Activated CD8-positive, alpha-beta memory T cell treated with anti-CD3 and anti-CD28 coated beads, Interleukin-2, amount 10 ng/mL, durations not matched to agents 7 days and 5 days (primary cell): ENCODE measurements at regions of chr14 and their contacts with region 1.

Region 1: DNA sequence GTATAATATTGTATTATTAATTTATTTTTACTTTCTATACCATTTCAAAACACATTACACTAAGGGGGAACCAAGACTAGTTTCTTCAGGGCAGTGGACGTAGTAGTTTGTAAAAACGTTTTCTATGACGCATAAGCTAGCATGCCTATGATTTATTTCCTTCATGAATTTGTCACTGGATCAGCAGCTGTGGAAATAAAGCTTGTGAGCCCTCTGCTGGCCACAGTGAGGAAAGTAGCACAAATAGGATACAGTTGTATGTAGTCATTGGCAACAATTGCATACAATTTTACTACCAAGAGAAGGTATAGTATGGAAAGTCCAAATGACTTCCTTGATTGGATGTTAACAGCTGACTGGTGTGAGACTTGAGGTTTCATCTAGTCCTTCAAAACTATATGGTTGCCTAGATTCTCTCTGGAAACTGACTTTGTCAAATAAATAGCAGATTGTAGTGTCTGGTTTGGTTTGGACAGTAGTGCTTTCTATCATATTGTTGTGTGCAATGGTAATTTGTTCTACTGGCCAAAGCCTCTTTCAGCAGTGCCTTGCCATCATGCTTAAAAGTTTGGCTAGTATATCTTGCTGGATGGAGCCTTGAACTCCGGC is 24.3 kb upstream of the PLEKHD1 start:
- DNase-seq: peak; percentile 77
- ATAC-seq: peak; percentile 80
- H3K4me3 Mint-ChIP-seq: no peak overlapping the region
- H3K27ac Mint-ChIP-seq: no peak overlapping the region
- H3K4me1 Mint-ChIP-seq: no peaks in the 10 kb centered on the region
- H3K27me3 Mint-ChIP-seq: no peaks in the 10 kb centered on the region

Region 2: GRCh38 chr14:69242311-69243224 is 217.6 kb before region 1 on chr14:
- CTCF ChIA-PET with region 1: interaction called, 37 read pairs
- DNase-seq: peak; percentile 68
- ATAC-seq: peak; percentile 77
- H3K4me3 Mint-ChIP-seq: no peak overlapping the region
- H3K27ac Mint-ChIP-seq: no peak overlapping the region
- H3K4me1 Mint-ChIP-seq: peaks cover 2% of the 10 kb centered on the region
- H3K27me3 Mint-ChIP-seq: no peaks in the 10 kb centered on the region

Region 3: GRCh38 chr14:69247676-69248440 is 212.3 kb before region 1 on chr14:
- CTCF ChIA-PET with region 1: interaction called, 37 read pairs
- DNase-seq: no peak
- ATAC-seq: no peak
- H3K4me3 Mint-ChIP-seq: no peak overlapping the region
- H3K27ac Mint-ChIP-seq: no peak overlapping the region
- H3K4me1 Mint-ChIP-seq: no peaks in the 10 kb centered on the region
- H3K27me3 Mint-ChIP-seq: peaks cover 5% of the 10 kb centered on the region

Region 4: GRCh38 chr14:69260861-69261564 is 199.2 kb before region 1 on chr14:
- CTCF ChIA-PET with region 1: interaction called, 27 read pairs
- DNase-seq: peak; percentile 48
- ATAC-seq: peak; percentile 76
- H3K4me3 Mint-ChIP-seq: peak overlapping the region; percentile 41
- H3K27ac Mint-ChIP-seq: no peak overlapping the region
- H3K4me1 Mint-ChIP-seq: peaks cover 6% of the 10 kb centered on the region
- H3K27me3 Mint-ChIP-seq: peaks cover 73% of the 10 kb centered on the region

Region 5: GRCh38 chr14:69346710-69347109 is 113.5 kb before region 1 on chr14:
- CTCF ChIA-PET with region 1: no interaction called
- DNase-seq: no peak
- ATAC-seq: no peak
- H3K4me3 Mint-ChIP-seq: no peak overlapping the region
- H3K27ac Mint-ChIP-seq: no peak overlapping the region
- H3K4me1 Mint-ChIP-seq: no peaks in the 10 kb centered on the region
- H3K27me3 Mint-ChIP-seq: peaks cover 24% of the 10 kb centered on the region

Region 6: GRCh38 chr14:69657950-69658355 is 197.8 kb after region 1 on chr14:
- CTCF ChIA-PET with region 1: no interaction called
- DNase-seq: no peak
- ATAC-seq: no peak
- H3K4me3 Mint-ChIP-seq: no peak overlapping the region
- H3K27ac Mint-ChIP-seq: peak overlapping the region; percentile 91
- H3K4me1 Mint-ChIP-seq: peaks cover 88% of the 10 kb centered on the region
- H3K27me3 Mint-ChIP-seq: no peaks in the 10 kb centered on the region